Sigmoid colon (tissue), 7 donors: ENCODE measurements at regions of chr9 and their contacts with region 1.

Region 1: GRCh38 chr9:121598965-121599871 is 52.2 kb upstream of the DAB2IP start:
- DNase-seq: peak; percentile 90
- H3K4me3 ChIP-seq: peak overlapping the region; percentile 46 to 69 (median 64)
- H3K27ac ChIP-seq: peak overlapping the region; percentile 88 to 98 (median 92)
- H3K4me1 ChIP-seq: peaks cover 0 to 66% (median 44%) of the 10 kb centered on the region in 4 donors
- H3K27me3 ChIP-seq: no peaks in the 10 kb centered on the region
- CTCF ChIP-seq: no peak
- EP300 ChIP-seq: no peak
- POLR2A ChIP-seq: no peak

Region 2: GRCh38 chr9:121557581-121558447 is 41.4 kb before region 1 on chr9:
- intact Hi-C with region 1: loop called (anchors 5 kb)
- DNase-seq: peak; percentile 85
- H3K4me3 ChIP-seq: no peak overlapping the region
- H3K27ac ChIP-seq: peak overlapping the region; percentile 78 to 88 (median 82)
- H3K4me1 ChIP-seq: peaks cover 0 to 35% (median 30%) of the 10 kb centered on the region in 4 donors
- H3K27me3 ChIP-seq: no peaks in the 10 kb centered on the region
- CTCF ChIP-seq: no peak
- EP300 ChIP-seq: peak in 1 of 4 donors; percentile 23
- POLR2A ChIP-seq: no peak

Region 3: DNA sequence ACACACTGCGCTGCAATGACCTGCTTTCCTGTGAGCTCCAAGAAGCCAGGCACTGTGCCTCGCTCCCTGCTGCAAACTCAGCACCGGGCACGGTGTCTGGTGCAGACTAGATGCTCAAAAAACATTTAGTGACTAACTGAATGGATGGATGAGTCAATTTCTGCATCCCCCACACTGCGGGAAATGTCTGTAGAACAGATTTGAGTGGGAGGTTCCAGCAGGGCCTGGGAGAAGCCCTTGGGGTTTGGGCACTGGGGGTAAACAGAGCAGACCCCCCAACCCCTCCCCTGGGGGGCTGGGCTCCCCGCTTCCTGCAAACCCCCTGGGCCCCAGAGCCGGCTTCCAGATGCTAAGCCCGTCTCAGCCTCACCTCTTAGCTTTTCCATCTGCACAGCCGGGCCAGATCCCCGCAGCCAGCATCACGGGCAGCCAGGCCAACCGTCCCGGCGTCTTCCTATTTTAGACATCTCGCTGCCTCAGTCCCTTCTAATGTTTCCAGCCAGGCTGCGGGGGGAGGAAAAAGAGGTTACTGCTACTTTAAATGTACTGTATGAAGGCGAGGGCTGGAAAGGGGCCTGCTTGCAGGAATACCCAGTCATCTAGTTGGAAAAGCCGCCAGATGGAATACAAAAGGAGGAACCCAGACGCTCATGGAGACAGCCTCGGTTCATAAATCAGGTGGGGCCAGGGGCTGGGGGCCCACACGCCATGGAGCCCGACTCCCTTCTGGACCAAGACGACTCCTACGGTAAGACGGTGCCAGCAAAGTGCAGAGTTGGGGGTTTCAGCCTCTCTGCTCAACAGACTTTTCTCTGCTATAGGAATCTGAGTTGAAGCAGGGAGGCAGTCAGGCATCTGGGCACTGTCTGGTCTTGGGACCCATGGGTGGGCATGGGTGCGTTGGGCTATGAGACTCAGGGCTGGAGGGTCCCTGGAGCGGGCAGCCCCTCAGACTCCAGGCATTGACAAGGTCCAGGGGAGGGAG is 32.4 kb before region 1 on chr9:
- intact Hi-C with region 1: loop called (anchors 2 kb)
- DNase-seq: peak; percentile 87
- H3K4me3 ChIP-seq: peak overlapping the region; percentile 31 to 60 (median 51)
- H3K27ac ChIP-seq: peak overlapping the region; percentile 84 to 94 (median 87)
- H3K4me1 ChIP-seq: peaks cover 0 to 60% (median 55%) of the 10 kb centered on the region in 4 donors
- H3K27me3 ChIP-seq: no peaks in the 10 kb centered on the region
- CTCF ChIP-seq: no peak
- EP300 ChIP-seq: no peak
- POLR2A ChIP-seq: no peak